Vagina (tissue), 2 donors: ENCODE measurements at regions of chr15 and their contacts with region 1.

Region 1: GRCh38 chr15:70156671-70157271 is 59.1 kb upstream of the TLE3 start:
- DNase-seq: no peak
- H3K4me3 ChIP-seq: no peak overlapping the region
- H3K27ac ChIP-seq: no peak overlapping the region
- H3K4me1 ChIP-seq: peaks cover 26% of the 10 kb centered on the region
- H3K27me3 ChIP-seq: no peaks in the 10 kb centered on the region
- CTCF ChIP-seq: no peak
- POLR2A ChIP-seq: no peak

Region 2: GRCh38 chr15:69794645-69795461 is 361.9 kb before region 1 on chr15:
- intact Hi-C with region 1: loop called (anchors 5 kb)
- DNase-seq: peak in 1 of 2 donors; percentile 88
- H3K4me3 ChIP-seq: no peak overlapping the region
- H3K27ac ChIP-seq: peak overlapping the region; percentile 30
- H3K4me1 ChIP-seq: peaks cover 15% of the 10 kb centered on the region
- H3K27me3 ChIP-seq: no peaks in the 10 kb centered on the region
- CTCF ChIP-seq: no peak
- POLR2A ChIP-seq: no peak

Region 3: DNA sequence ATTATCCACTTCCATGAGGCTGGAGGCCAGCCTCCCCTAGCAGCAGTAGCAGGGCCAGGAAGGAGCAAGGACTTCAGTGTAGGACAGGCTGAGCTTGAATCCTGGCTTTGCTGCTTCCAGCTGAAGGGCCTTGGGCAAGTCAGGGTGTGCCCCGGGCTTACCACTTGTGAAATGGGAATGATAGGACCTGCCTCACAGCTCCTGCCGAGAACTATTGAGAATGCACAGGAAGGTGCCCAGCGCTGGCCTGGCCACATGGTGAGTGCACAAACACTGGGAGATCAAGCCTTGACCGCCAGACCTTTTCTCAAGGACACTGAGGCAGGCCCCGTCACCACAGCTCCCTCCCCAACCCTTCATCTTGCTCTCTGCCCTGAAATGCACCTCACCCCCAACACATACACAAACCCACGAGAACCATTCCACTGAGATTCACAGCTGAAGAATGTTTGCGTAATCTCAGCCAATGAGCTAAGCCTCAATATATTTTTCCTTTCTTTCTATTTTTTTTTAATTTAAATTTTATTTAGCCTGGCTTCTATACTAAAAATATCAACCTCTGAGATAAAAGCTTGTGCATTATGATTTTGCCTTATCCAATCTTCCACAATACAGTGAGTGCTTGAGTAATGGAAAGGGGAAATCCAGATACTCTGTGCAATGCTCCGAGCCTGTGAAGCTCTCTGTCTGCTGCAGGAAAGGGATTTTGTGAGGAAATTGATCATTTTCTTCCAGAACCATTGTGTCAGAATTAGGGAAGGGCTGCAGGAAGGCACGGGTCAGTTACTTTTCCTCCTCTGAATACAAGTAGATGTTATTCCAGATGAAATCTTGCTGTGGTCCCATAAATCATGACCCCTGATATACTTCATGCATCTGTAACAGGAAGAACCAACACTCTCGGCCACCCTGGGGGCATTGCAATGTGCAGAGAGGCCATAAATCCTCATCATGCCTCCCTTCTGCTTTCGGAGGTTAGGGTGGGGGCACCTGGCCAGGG is 253.0 kb before region 1 on chr15:
- intact Hi-C with region 1: no loop called
- DNase-seq: no peak
- H3K4me3 ChIP-seq: no peak overlapping the region
- H3K27ac ChIP-seq: no peak overlapping the region
- H3K4me1 ChIP-seq: no peaks in the 10 kb centered on the region
- H3K27me3 ChIP-seq: no peaks in the 10 kb centered on the region
- CTCF ChIP-seq: no peak
- POLR2A ChIP-seq: no peak

Region 4: DNA sequence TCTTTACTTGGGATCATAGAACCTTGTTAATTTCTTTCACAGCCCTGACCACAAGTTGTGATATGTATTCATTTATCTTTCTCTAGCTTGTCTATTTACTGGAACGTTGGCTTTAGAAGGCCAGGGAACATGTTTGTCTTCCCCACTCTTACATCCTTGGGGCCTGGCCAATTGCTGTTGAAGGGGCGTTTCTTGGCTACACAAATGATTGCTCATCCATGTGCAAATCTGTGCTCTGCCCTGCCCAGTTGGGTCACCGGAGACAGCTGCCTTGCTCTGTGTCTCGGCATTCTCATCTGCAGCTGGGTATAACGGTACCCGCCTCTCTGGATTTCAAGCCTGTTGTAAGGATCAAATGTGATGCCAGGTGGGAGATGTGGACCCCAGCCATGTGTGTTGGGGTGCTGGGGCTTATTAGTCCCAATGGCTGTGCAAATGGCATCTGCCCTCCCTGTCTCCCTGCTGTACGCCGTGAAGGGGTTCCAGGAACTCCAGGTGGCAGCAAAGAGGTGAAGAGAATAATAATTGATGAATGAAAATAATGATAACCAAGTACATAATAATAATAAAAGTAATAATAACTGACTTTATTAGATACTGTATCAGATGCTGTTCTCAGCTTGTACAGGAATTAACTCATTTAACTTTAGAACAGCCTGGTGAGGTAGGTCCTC is 35.0 kb before region 1 on chr15:
- intact Hi-C with region 1: loop called (anchors 5 kb)
- DNase-seq: no peak
- H3K4me3 ChIP-seq: no peak overlapping the region
- H3K27ac ChIP-seq: peak overlapping the region; percentile 60
- H3K4me1 ChIP-seq: peaks cover 34% of the 10 kb centered on the region
- H3K27me3 ChIP-seq: no peaks in the 10 kb centered on the region
- CTCF ChIP-seq: no peak
- POLR2A ChIP-seq: no peak